ENCODE measurements at regions of chr7 and their contacts with region 1.

Region 1: DNA sequence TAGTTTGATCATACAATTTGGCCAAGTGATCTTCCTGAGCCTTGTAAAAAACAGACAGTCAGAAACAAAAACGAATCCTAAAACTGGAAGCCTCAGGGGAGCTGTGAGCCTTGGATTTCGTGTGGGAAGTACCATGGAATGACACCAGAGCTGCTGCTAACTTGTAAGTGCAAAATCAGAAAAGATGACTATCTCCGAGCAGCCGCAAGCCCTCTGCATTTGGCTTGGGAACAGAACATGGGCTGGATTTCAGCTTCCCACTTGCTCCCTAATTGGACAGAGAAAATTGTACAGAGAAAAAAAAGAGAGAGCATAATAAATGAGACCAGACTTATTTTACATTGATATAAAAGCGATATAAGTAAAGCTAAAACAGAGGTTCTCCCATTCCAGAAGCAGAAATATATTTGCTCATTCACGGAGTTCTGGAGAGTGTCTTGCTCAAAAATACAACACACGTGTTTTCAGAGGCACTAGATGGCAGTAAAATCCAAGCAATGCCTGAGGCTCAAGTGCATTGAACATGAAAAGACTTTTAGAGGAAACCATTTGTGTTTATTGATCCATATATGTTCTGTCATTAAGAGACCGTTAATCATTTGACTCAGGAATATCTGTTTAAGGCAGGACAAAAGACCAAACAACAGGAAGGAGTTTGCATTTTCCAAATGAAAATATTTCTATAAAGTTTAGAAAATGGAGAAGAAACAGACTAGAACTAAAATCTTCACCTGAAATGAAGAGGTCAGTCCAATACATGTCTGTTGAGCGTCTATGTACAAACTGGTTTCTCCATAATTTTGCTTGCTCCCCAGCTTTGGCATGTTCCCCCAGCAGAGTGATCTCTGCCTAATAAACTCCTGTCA is 78.3 kb upstream of the SLC26A5 start:
- DNase-seq: peak in 6 of 10 donors; percentile 19 to 84 (median 40)

Region 2: DNA sequence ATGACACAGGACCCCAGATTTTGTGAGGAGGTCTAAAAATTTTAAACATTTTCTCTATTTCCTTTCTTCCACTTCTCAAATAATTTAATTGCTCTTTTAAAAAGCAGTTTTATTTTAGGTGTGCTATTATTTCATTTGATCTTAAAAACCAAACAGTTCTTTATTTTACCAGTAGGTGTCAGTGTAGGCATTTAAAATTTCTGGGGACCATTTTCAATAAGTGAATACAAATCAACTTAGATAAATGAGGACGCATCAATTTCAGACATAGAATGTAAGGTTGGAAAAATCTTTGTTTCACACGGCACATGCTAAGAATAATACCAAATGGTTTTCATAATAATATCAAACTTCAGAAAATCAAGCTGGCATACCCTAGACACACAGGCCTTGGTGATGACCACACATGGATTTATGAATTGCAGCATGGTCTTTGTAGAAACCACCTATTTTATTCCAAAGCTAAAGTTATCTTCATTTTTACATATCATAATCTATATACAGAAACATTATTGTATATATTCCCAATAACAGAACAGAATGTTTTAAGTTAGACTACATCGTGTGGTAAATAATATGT is 49.3 kb after region 1 on chr7:
- intact Hi-C with region 1: loop called (anchors 5 kb)
- DNase-seq: no peak

Region 3: DNA sequence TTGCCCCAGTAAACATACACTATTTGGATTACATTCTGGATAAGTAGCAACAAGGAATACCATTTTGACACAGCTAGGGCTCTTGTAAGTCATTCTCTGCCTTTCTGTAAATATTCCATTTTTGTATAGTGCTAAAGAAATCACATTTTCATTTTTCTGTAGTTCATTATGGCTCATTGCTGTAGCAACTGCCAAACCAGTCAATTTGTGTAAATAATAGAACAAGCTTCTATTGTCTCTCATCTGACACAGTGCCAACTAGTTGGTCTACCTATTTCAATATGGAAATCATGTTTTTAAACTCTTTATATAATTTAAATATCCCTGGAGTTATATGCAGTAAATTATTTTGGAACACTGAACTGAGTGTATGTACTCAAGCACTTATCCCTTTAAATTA is 271.5 kb after region 1 on chr7:
- intact Hi-C with region 1: no loop called
- DNase-seq: no peak

Region 4: GRCh38 chr7:104156842-104157277 is 632.6 kb after region 1 on chr7:
- intact Hi-C with region 1: loop called (anchors 2 kb)
- DNase-seq: no peak

Region 5: GRCh38 chr7:104267701-104268368 is 743.6 kb after region 1 on chr7:
- intact Hi-C with region 1: loop called (anchors 2 kb)
- DNase-seq: no peak

Measured in posterior cingulate gyrus (tissue), 11 donors.